A549 (cell line): ENCODE measurements at regions of chr10 and their contacts with region 1.

Region 1: GRCh38 chr10:116796910-116797513 is 52.3 kb upstream of the ENO4 start:
- DNase-seq: peak; percentile 72 to 78
- ATAC-seq: peak; percentile 90 to 99
- H3K4me3 ChIP-seq: no peak overlapping the region
- H3K27ac ChIP-seq: no peak overlapping the region
- H3K4me1 ChIP-seq: no peaks in the 10 kb centered on the region
- CTCF ChIP-seq: peak; percentile 93
- EP300 ChIP-seq: no peak
- POLR2A ChIP-seq: no peak
- RAD21 ChIP-seq: peak; percentile 96 to 98

Region 2: DNA sequence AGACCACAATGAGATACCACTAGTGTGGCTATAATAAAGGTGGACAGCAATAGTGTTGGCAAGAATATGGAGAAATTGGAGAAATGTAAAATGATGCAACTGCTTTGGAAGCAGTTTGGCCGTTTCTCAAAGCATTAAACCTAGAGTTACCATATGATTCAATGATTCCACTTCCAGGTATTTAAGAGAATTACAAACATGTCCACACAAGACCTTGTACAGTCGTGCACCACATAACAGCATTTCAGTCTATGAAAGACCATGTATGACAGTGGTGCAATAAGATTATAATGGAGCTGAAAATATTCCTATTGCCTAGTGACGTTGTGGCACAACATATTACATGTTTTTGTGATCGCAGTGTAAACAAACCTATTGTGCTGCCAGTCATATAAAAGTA is 443.2 kb before region 1 on chr10:
- CTCF ChIA-PET with region 1: no interaction called
- POLR2A ChIA-PET with region 1: no interaction called
- DNase-seq: no peak
- ATAC-seq: no peak
- H3K4me3 ChIP-seq: no peak overlapping the region
- H3K27ac ChIP-seq: no peak overlapping the region
- H3K4me1 ChIP-seq: no peaks in the 10 kb centered on the region
- CTCF ChIP-seq: no peak
- EP300 ChIP-seq: no peak
- POLR2A ChIP-seq: no peak
- RAD21 ChIP-seq: no peak

Region 3: DNA sequence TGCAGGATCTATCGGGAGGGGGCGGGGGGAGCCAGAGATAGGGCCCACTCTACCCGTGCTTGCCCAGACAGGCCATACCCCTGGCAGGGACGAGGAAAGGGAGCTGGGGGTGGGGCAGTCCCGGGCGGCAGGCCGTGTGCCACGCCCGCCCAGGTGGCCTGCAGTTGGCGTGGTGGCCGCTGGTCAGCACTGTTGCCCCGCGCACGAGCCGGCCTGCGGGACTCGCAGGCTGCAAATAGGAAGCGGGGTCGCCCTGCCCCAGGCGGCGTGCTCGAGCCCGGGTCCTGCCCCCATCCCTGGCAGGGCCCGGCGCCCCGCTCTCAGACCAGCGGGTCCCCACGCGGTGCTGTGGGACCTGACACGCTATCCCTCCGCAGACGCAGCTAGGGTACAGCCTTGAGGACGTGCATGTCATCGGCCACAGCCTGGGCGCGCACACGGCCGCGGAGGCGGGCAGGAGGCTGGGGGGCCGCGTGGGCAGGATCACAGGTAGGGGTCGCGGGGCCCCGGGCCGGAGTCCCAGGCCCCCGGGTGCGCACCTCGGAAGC is 169.6 kb before region 1 on chr10:
- CTCF ChIA-PET with region 1: interaction called, 12 read pairs
- POLR2A ChIA-PET with region 1: no interaction called
- DNase-seq: peak; percentile 44 to 48
- ATAC-seq: peak; percentile 92 to 97
- H3K4me3 ChIP-seq: peak overlapping the region; percentile 56
- H3K27ac ChIP-seq: peak overlapping the region; percentile 58 to 74; a peak in 4 of 6 replicates
- H3K4me1 ChIP-seq: no peaks in the 10 kb centered on the region
- CTCF ChIP-seq: peak; percentile 52
- EP300 ChIP-seq: no peak
- POLR2A ChIP-seq: no peak
- RAD21 ChIP-seq: peak; percentile 47 to 67

Region 4: DNA sequence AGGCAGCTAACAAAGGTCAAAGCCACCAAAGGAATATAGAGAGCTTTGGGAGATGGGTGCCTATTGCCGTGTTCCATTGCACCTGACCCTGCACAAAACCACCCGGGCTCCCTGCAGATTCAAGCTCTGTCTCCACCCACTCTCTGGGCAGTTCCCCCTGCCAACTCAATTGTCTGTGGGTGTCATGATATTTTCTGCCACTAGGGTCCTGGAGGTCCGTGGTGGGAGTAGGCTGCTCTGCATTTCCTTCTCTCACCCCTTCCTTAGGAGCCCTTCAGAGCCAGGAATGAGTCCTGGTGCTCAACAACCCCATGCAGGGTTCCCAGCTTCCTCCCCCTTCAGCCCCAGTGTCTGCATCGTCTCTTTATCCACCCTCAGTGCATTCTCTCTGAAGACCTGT is 142.2 kb before region 1 on chr10:
- CTCF ChIA-PET with region 1: no interaction called
- POLR2A ChIA-PET with region 1: no interaction called
- DNase-seq: peak; percentile 31 to 48
- ATAC-seq: peak; percentile 61 to 96; a peak in 4 of 6 replicates
- H3K4me3 ChIP-seq: no peak overlapping the region
- H3K27ac ChIP-seq: no peak overlapping the region
- H3K4me1 ChIP-seq: peaks cover 14% of the 10 kb centered on the region; the same call in 2 of the 3 replicates
- CTCF ChIP-seq: no peak
- EP300 ChIP-seq: no peak
- POLR2A ChIP-seq: no peak
- RAD21 ChIP-seq: no peak

Region 5: DNA sequence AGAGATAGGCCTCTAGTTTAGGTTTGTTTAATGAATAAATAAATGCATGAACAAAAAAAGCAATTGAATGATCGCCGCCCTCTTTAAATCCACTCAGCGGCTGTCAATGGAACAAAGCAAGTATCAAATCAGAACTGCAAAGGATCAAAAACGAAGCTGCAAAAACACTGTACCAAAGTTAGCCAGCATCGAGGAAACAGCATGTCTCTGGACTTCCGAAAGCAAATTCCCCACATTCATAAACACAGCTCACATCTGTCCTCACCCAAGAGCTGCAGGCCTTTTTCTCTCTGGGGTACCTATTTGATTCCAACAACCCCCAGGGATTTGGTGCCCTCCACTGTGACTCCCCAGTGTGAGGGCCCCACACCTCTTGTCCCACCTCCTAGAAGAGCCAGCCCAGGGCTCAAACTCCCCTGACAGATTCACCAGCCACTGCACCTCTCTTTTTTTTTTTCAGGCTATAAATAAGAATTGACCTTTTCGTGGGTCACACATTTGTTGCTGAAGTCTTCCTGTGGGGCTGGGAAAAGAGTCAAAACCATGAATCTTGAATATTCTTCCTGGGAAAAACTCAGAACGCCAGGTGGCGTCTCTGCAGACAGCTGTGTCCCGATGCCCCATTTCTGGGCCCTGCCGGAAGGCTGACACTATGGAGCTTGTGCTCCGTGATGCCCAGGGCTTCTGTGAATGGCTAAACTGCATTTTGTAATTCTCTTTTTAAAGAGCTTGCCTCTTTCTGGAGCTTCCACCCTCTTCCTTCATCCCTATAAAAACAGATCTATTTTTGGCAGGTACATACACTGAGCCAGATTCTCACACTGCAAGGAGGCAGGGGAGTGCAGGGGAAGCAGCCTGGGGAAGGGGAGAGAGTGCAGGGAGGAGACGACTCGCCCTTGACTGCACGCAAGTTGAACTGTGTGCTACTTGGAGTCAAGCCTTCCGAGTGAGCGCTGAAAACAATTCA is 106.4 kb before region 1 on chr10:
- CTCF ChIA-PET with region 1: interaction called, 277 read pairs
- POLR2A ChIA-PET with region 1: no interaction called
- DNase-seq: no peak
- ATAC-seq: peak in 1 of 2 experiments; percentile 53; a peak in 2 of 6 replicates
- H3K4me3 ChIP-seq: no peak overlapping the region
- H3K27ac ChIP-seq: no peak overlapping the region
- H3K4me1 ChIP-seq: no peaks in the 10 kb centered on the region
- CTCF ChIP-seq: peak; percentile 2; the same call in 1 of the 3 replicates
- EP300 ChIP-seq: no peak
- POLR2A ChIP-seq: no peak
- RAD21 ChIP-seq: peak; percentile 21 to 22; a peak in 1 of 5 replicates

Region 6: GRCh38 chr10:116809483-116810119 is 12.6 kb after region 1 on chr10:
- CTCF ChIA-PET with region 1: interaction called, 84 read pairs
- POLR2A ChIA-PET with region 1: no interaction called
- DNase-seq: peak; percentile 44 to 48
- ATAC-seq: peak; percentile 62 to 86; a peak in 5 of 6 replicates
- H3K4me3 ChIP-seq: no peak overlapping the region; the same call in 2 of the 3 replicates
- H3K27ac ChIP-seq: peak overlapping the region in 1 of 2 experiments; percentile 34; a peak in 1 of 6 replicates
- H3K4me1 ChIP-seq: no peaks in the 10 kb centered on the region
- CTCF ChIP-seq: peak; percentile 44
- EP300 ChIP-seq: no peak
- POLR2A ChIP-seq: no peak
- RAD21 ChIP-seq: no peak

Region 7: GRCh38 chr10:116972131-116972530 is 175.1 kb after region 1 on chr10:
- CTCF ChIA-PET with region 1: no interaction called
- POLR2A ChIA-PET with region 1: no interaction called
- DNase-seq: no peak
- ATAC-seq: no peak
- H3K4me3 ChIP-seq: no peak overlapping the region
- H3K27ac ChIP-seq: no peak overlapping the region
- H3K4me1 ChIP-seq: peaks cover 23% of the 10 kb centered on the region
- CTCF ChIP-seq: no peak
- EP300 ChIP-seq: no peak
- POLR2A ChIP-seq: no peak
- RAD21 ChIP-seq: no peak

Region 8: GRCh38 chr10:117186832-117187615 is 390.0 kb after region 1 on chr10:
- CTCF ChIA-PET with region 1: interaction called, 11 read pairs
- POLR2A ChIA-PET with region 1: no interaction called
- DNase-seq: peak in 1 of 2 experiments; percentile 20
- ATAC-seq: peak in 1 of 2 experiments; percentile 70; a peak in 3 of 6 replicates
- H3K4me3 ChIP-seq: no peak overlapping the region
- H3K27ac ChIP-seq: no peak overlapping the region
- H3K4me1 ChIP-seq: peaks cover 5% of the 10 kb centered on the region; the same call in 1 of the 3 replicates
- CTCF ChIP-seq: no peak
- EP300 ChIP-seq: no peak
- POLR2A ChIP-seq: no peak
- RAD21 ChIP-seq: no peak